Activated CD8-positive, alpha-beta T cell treated with anti-CD3 and anti-CD28 coated beads for 36 hours (primary cell): ENCODE measurements at regions of chr5 and their contacts with region 1.

Region 1: GRCh38 chr5:40679155-40679913 is 381 bp upstream of the PTGER4 start:
- DNase-seq: peak; percentile 96
- ATAC-seq: peak; percentile 64
- H3K4me3 Mint-ChIP-seq: peak overlapping the region; percentile 99
- H3K27ac Mint-ChIP-seq: peak overlapping the region; percentile 98
- H3K4me1 Mint-ChIP-seq: peaks cover 33% of the 10 kb centered on the region
- H3K27me3 Mint-ChIP-seq: no peaks in the 10 kb centered on the region
- CTCF ChIP-seq: no peak

Region 2: DNA sequence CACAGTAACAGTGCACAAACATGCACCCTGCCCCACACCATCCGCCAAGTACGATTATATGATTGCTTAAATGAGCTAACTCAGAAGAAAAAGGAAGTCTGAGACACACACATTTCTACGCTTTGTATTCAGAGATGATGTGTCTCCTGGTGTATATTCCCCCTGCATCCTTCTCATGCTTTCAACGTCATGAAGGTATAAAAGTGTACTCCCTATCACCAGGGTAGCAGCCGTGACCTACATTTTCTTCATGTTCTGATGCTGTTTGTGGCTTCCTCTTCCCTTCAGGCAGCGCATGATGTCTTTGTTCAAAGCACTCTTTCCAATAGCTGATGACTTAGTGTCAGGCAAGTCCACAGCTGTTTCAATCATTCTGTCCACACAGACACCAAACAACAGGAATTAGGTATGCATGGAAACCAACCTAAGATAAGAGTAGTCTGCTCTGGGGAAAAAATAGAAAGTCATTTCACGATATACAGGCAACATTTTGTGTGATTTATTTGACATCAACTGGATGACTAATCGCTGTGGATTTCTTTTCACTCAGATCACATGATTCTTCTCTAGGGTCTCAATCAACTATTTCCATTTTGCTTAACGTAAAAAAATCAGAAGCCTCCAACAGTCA is 269.0 kb before region 1 on chr5:
- CTCF ChIA-PET with region 1: interaction called, 6 read pairs
- POLR2A ChIA-PET with region 1: interaction called, 45 read pairs
- intact Hi-C with region 1: loop called (anchors 2 kb)
- DNase-seq: peak; percentile 80
- ATAC-seq: peak; percentile 83
- H3K4me3 Mint-ChIP-seq: peak overlapping the region; percentile 62
- H3K27ac Mint-ChIP-seq: peak overlapping the region; percentile 93
- H3K4me1 Mint-ChIP-seq: peaks cover 63% of the 10 kb centered on the region
- H3K27me3 Mint-ChIP-seq: no peaks in the 10 kb centered on the region
- CTCF ChIP-seq: no peak

Region 3: DNA sequence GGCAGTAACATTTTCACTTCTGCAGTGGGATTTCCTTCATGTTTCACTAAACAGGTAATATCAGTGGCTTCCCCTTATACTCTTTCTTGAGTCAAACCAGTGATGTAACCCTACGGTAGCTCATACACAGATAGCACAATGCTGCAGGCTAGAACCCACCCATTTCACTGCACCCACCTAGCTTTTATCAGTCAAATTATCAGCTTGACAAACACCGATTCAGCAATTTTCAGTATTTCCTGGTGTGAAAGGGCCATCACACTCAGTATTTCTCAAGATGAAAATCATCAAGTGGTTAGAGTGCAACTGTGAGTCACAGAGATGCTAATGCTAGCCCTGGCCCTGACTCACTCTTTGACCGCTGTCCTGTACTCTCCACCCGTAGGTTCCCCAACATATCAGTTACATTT is 241.9 kb before region 1 on chr5:
- CTCF ChIA-PET with region 1: interaction called, 4 read pairs
- POLR2A ChIA-PET with region 1: interaction called, 8 read pairs
- intact Hi-C with region 1: loop called (anchors 5 kb)
- DNase-seq: peak; percentile 63
- ATAC-seq: peak; percentile 72
- H3K4me3 Mint-ChIP-seq: peak overlapping the region; percentile 19
- H3K27ac Mint-ChIP-seq: peak overlapping the region; percentile 86
- H3K4me1 Mint-ChIP-seq: peaks cover 81% of the 10 kb centered on the region
- H3K27me3 Mint-ChIP-seq: no peaks in the 10 kb centered on the region
- CTCF ChIP-seq: no peak

Region 4: DNA sequence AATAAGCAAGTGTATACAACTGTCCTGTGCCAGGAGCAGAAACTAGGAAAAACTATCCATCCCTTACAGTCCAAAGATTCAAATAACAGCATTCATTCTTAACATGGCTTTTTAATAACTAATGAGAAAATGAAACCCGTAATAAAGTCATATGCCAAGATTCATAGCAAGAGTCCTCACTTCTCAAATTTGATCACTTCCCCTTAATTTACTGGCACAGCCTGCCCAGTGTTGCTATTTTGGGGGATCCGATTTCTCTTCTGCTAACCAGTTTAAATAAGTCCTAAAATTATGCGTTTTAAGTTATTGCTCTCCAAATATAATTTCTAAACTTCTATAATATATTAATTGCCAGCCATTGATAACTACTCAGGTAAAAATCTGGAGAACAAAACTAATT is 176.6 kb before region 1 on chr5:
- CTCF ChIA-PET with region 1: no interaction called
- POLR2A ChIA-PET with region 1: no interaction called
- intact Hi-C with region 1: loop called (anchors 1 kb)
- DNase-seq: no peak
- ATAC-seq: no peak
- H3K4me3 Mint-ChIP-seq: no peak overlapping the region
- H3K27ac Mint-ChIP-seq: no peak overlapping the region
- H3K4me1 Mint-ChIP-seq: peaks cover 15% of the 10 kb centered on the region
- H3K27me3 Mint-ChIP-seq: no peaks in the 10 kb centered on the region
- CTCF ChIP-seq: no peak

Region 5: DNA sequence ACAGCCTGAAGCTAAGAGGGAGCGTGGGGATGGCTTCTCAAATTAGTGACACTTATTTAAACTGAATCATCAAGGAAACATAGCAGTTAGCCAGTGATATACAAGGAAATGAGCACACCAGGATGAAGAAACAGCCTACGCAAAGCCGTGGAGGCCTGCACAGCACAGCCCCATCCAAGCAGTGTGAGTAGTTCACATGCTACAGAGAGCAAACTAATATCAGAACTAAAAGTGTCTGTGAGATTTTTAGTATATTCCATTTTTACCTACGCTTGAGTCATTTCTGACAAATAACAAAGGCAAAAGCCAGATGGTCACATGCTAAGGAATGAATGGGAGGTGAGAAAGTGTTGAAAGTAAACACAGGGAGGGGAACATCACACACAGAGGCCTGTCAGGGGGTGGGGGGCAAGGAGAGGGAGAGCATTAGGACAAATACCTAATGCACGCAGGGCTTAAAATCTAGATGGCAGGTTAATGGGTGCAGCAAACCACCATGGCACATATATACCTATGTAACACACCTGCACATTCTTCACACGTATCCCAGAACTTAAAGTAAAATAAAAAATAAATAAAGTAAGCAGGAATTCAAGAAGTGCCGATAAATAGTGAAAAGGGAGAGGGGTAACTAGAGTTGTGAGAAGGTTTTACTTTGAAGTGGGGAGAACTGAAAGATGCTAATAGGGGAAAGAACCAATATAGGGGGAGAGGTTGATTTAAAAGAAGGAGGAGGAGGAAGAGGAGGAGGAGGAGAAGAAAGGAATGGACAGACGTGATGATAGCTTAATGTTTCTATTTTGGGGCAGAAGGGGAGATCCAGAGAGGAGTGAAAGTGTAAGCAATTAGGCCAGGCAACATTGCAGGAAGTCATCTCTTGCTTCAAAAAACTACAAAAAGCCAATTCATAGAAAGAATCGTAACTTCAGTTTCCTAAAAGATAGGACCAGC is 100.6 kb before region 1 on chr5:
- CTCF ChIA-PET with region 1: interaction called, 3 read pairs
- POLR2A ChIA-PET with region 1: interaction called, 6 read pairs
- intact Hi-C with region 1: loop called (anchors 1 kb)
- DNase-seq: peak; percentile 84
- ATAC-seq: peak; percentile 90
- H3K4me3 Mint-ChIP-seq: peak overlapping the region; percentile 64
- H3K27ac Mint-ChIP-seq: peak overlapping the region; percentile 84
- H3K4me1 Mint-ChIP-seq: peaks cover 38% of the 10 kb centered on the region
- H3K27me3 Mint-ChIP-seq: no peaks in the 10 kb centered on the region
- CTCF ChIP-seq: no peak

Region 6: GRCh38 chr5:40653221-40654022 is 25.9 kb before region 1 on chr5:
- CTCF ChIA-PET with region 1: interaction called, 4 read pairs
- POLR2A ChIA-PET with region 1: interaction called, 10 read pairs
- intact Hi-C with region 1: loop called (anchors 2 kb)
- DNase-seq: peak; percentile 26
- ATAC-seq: peak; percentile 26
- H3K4me3 Mint-ChIP-seq: peak overlapping the region; percentile 71
- H3K27ac Mint-ChIP-seq: peak overlapping the region; percentile 94
- H3K4me1 Mint-ChIP-seq: peaks cover 72% of the 10 kb centered on the region
- H3K27me3 Mint-ChIP-seq: no peaks in the 10 kb centered on the region
- CTCF ChIP-seq: no peak